Activated CD4-positive, alpha-beta T cell treated with anti-CD3 and anti-CD28 coated beads for 36 hours (primary cell): ENCODE measurements at regions of chr1 and their contacts with region 1.

Region 1: GRCh38 chr1:185681034-185681633 is 53.1 kb upstream of the HMCN1 start:
- DNase-seq: peak; percentile 16
- ATAC-seq: peak; percentile 73
- H3K4me3 Mint-ChIP-seq: no peak overlapping the region
- H3K27ac Mint-ChIP-seq: no peak overlapping the region
- H3K4me1 Mint-ChIP-seq: peaks cover 25% of the 10 kb centered on the region
- H3K27me3 Mint-ChIP-seq: no peaks in the 10 kb centered on the region

Region 2: DNA sequence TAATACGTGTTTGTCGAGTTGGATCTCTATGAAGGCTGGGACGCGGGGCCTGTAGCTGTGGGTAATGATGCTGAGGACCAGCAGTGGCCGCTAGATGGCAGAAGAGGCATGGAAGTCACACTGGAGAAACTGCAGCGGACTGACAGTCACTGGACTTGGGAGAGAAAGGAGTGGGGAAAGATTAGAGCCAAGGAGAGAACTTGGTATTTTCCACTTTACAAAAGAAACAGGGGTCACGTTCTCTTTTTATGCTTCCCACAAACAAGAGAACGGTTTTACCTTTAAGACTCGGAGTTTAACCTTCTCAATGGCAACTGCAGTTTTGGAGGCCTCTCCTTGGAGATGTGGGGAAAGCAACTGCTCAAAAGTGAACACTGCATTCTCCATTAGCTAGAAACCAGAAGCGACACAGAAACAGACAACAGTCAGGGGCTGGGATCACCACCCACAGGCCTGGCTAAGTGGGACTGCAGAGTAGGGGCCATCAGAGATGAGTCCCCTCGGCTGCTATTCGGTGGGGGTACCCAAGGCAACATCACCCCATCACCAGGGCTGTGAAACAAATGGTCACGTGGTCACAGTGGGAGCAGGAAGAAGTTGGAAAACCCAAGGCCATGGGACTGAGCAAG is 875.4 kb before region 1 on chr1:
- CTCF ChIA-PET with region 1: no interaction called
- POLR2A ChIA-PET with region 1: no interaction called
- intact Hi-C with region 1: loop called in 1 of 2 experiments (anchors 5 kb)
- DNase-seq: peak; percentile 91
- ATAC-seq: peak; percentile 99
- H3K4me3 Mint-ChIP-seq: no peak overlapping the region
- H3K27ac Mint-ChIP-seq: no peak overlapping the region
- H3K4me1 Mint-ChIP-seq: peaks cover 4% of the 10 kb centered on the region
- H3K27me3 Mint-ChIP-seq: no peaks in the 10 kb centered on the region

Region 3: GRCh38 chr1:185170291-185170848 is 510.8 kb before region 1 on chr1:
- CTCF ChIA-PET with region 1: interaction called, 13 read pairs
- POLR2A ChIA-PET with region 1: no interaction called
- intact Hi-C with region 1: loop called in 1 of 2 experiments (anchors 5 kb)
- DNase-seq: peak; percentile 53
- ATAC-seq: peak; percentile 89
- H3K4me3 Mint-ChIP-seq: no peak overlapping the region
- H3K27ac Mint-ChIP-seq: no peak overlapping the region
- H3K4me1 Mint-ChIP-seq: peaks cover 7% of the 10 kb centered on the region
- H3K27me3 Mint-ChIP-seq: no peaks in the 10 kb centered on the region

Region 4: DNA sequence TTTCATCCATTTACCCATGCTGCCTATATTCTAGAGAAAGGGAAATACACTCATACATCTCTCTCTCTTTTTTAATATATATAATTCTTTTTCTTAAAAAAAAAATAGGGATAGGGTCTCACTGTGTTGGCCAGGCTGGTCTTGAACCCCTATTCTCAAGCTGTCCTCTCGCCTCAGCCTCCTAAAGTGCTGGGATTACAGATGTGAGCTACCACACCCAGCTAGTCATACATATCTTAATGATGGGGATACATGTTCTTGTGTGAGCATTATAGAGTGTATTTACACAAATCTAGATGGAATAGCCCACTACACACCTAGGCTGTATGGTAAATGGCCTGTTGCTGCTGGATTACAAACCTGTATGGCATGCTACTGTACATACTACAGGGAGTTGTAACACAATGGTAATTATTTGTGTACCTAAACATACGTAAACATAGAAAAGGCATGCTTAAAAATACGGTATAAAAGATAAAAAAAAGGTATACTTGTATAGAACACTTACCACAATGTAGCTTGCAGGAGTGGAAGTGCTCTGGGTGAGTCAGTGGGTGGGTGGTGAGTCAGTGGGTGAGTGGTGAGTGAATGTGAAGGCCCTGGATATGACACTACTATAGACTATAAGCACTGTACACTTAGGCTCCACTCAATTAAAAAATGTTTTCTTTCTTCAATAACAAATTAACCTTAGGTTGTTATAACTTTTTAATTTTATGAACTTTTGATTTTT is 437.0 kb before region 1 on chr1:
- CTCF ChIA-PET with region 1: interaction called, 12 read pairs
- POLR2A ChIA-PET with region 1: no interaction called
- intact Hi-C with region 1: loop called (anchors 2 to 5 kb)
- DNase-seq: peak; percentile 76
- ATAC-seq: peak; percentile 99
- H3K4me3 Mint-ChIP-seq: no peak overlapping the region
- H3K27ac Mint-ChIP-seq: no peak overlapping the region
- H3K4me1 Mint-ChIP-seq: peaks cover 27% of the 10 kb centered on the region
- H3K27me3 Mint-ChIP-seq: no peaks in the 10 kb centered on the region

Region 5: DNA sequence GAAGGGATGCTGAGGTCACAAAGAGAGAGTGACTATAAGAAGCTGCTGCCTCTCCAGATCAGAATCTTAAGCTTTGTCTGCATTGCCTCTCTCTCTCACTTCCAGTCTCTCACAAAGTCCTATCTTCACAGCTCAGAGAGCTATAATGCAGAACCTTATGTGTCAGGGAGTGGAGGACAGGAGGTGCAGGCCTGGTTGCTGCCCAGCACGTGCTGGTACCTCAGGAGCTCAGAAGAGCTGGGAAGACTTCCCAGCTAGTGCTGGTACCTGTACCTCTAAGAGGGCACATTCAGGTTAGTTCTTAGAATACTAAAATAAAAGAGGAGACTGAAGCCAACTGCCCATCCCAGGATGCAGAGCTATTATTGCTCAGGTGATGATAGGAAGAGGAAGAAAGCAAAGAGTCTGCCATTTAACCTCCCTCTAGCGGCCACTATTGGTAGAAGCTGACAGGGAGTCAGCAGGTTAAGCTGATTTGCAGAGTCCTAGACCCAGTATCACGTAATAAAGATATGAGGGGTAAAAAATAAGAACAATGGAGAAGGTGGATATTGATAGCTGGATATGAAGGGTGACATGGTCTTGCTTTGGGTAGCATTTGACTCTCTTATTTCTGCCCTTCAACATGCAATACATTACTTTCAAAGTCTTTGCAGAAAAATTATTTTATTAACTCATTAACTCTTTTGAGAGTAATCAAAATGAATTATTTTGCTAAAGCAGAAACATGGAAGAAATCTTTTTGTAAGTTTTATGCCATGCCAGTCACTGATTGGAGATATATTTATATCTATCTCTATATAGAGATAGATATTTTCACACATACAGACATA is 85.1 kb before region 1 on chr1:
- CTCF ChIA-PET with region 1: interaction called, 16 read pairs
- POLR2A ChIA-PET with region 1: no interaction called
- intact Hi-C with region 1: no loop called
- DNase-seq: peak; percentile 61
- ATAC-seq: peak; percentile 75
- H3K4me3 Mint-ChIP-seq: no peak overlapping the region
- H3K27ac Mint-ChIP-seq: no peak overlapping the region
- H3K4me1 Mint-ChIP-seq: peaks cover 10% of the 10 kb centered on the region
- H3K27me3 Mint-ChIP-seq: no peaks in the 10 kb centered on the region

Region 6: DNA sequence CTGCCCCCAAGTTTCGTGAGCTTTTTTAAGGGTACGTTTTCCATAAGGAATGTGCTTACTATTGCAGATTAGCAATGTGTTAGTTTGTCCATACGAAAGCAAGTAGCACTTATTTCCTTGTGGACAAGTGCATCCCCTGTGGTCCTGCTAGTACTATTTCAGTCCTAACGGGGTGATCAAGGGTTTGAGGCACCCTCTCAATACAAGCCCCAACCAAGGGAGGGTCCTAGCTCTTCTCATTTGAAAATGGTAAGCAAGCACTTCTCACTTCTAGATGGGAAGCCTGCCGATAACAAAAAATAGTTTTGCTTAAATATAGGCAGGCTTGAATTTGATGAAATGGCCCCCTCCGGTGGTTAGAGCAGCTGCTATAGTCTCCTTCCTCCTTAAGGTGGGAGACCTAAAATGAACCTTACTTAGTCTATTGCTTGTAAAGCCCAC is 10.9 kb before region 1 on chr1:
- CTCF ChIA-PET with region 1: interaction called, 19 read pairs
- POLR2A ChIA-PET with region 1: no interaction called
- intact Hi-C with region 1: no loop called
- DNase-seq: peak; percentile 64
- ATAC-seq: peak; percentile 85
- H3K4me3 Mint-ChIP-seq: no peak overlapping the region
- H3K27ac Mint-ChIP-seq: no peak overlapping the region
- H3K4me1 Mint-ChIP-seq: peaks cover 23% of the 10 kb centered on the region
- H3K27me3 Mint-ChIP-seq: no peaks in the 10 kb centered on the region